GM12878 (cell line): ENCODE measurements at regions of chr3 and their contacts with region 1.

Region 1: DNA sequence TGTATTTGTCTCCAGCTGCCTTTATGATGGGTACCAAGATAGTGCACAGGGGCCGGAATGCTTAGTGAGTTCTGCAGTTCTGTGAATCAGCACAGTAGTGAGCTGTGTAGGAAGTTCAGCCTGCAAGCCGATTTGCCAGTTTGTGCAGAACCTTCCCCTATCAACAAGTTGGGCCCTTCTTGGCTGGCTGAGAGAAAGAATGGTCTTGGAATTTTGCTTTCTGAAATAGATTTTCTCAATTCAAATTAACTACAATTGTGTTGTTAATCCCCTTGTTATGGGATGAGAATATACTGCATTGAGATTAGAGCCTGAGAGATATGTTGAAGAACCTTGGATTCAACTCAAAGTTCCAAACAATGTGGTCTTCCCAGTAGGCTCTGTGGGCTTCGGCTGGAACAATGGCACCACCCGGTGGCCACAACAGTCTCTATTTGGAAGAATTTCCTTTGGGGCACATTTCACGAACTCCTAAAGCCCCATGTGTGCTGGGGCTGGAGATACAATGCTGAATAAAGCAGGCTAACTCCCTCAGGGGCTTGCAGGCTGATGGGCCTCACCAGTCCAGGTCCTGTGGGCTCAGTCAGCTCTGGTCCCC is 59.1 kb downstream of the TRIM42 start:
- DNase-seq: no peak
- ATAC-seq: peak; percentile 83
- H3K4me3 ChIP-seq: no peak overlapping the region
- H3K27ac ChIP-seq: no peak overlapping the region
- H3K4me1 ChIP-seq: no peaks in the 10 kb centered on the region
- H3K27me3 ChIP-seq: peaks cover 0 to 6% of the 10 kb centered on the region in 2 experiments; a peak in 2 of 4 replicates
- CTCF ChIP-seq: peak; percentile 33 to 67 (median 45); a peak in 4 of 6 replicates
- EP300 ChIP-seq: no peak
- POLR2A ChIP-seq: no peak
- RAD21 ChIP-seq: peak; percentile 64

Region 2: DNA sequence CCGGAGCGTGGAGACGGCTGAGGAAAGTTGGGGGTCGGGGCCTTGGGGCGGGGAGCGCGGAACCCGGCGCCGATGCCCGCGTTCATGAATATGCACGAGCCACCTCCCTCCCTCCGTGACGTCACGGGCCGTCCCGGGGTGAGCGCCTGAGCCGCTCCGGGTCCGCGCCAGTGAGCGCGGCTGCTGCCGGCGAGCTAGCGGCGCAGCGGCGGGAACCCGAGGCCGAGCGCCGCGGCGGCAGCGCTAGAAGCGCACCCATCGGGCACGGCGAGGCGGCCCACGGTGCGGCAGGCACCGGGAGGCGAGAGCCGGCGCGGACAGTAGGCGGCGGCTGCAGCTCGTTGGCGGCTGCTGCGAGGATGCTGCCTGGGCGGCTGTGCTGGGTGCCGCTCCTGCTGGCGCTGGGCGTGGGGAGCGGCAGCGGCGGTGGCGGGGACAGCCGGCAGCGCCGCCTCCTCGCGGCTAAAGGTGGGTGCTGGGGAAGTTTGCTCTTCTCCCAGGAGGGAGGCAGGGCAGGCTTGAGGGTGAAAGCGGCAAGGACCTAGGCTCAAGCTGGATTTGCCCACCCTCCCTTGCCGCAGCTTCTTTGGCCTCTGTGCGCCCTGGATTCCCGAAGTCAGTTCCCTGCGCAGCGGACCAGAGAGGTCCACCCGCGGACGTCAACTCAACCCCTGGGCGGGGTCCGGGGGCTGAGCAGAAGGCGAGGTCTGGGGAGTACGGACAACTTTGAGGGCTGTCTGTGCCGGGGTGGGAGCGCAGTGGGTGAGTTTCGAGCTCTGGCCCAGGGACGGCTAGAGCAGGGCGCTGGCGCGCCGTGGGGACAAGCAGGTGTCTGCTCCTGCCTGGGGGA is 801.7 kb before region 1 on chr3 and contains the start of gene CLSTN2:
- CTCF ChIA-PET with region 1: no interaction called
- POLR2A ChIA-PET with region 1: no interaction called
- RAD21 ChIA-PET with region 1: no interaction called
- SMC1A ChIA-PET with region 1: interaction called, 6 read pairs
- in situ Hi-C with region 1: no loop called
- intact Hi-C with region 1: loop called (anchors 1 kb)
- DNase-seq: no peak
- ATAC-seq: peak; percentile 51
- H3K4me3 ChIP-seq: no peak within 1 kb of the TSS
- H3K27ac ChIP-seq: no peak within 1 kb of the TSS
- H3K4me1 ChIP-seq: no peaks in the 10 kb centered on the region
- H3K27me3 ChIP-seq: peaks cover 7% of the 10 kb centered on the region in 2 experiments; a peak in 3 of 4 replicates
- CTCF ChIP-seq: no peak
- EP300 ChIP-seq: no peak
- POLR2A ChIP-seq: no peak
- RAD21 ChIP-seq: no peak
- polyA plus RNA-seq, gene CLSTN2: under 0.01 to 0.10 TPM

Region 3: GRCh38 chr3:140432229-140432669 is 304.7 kb before region 1 on chr3:
- CTCF ChIA-PET with region 1: no interaction called
- POLR2A ChIA-PET with region 1: no interaction called
- RAD21 ChIA-PET with region 1: no interaction called
- SMC1A ChIA-PET with region 1: no interaction called
- in situ Hi-C with region 1: no loop called
- intact Hi-C with region 1: loop called (anchors 10 kb)
- DNase-seq: no peak
- ATAC-seq: no peak
- H3K4me3 ChIP-seq: no peak overlapping the region
- H3K27ac ChIP-seq: no peak overlapping the region
- H3K4me1 ChIP-seq: no peaks in the 10 kb centered on the region
- H3K27me3 ChIP-seq: peaks cover 0 to 1% of the 10 kb centered on the region in 2 experiments; a peak in 2 of 4 replicates
- CTCF ChIP-seq: no peak
- EP300 ChIP-seq: no peak
- POLR2A ChIP-seq: no peak
- RAD21 ChIP-seq: no peak

Region 4: DNA sequence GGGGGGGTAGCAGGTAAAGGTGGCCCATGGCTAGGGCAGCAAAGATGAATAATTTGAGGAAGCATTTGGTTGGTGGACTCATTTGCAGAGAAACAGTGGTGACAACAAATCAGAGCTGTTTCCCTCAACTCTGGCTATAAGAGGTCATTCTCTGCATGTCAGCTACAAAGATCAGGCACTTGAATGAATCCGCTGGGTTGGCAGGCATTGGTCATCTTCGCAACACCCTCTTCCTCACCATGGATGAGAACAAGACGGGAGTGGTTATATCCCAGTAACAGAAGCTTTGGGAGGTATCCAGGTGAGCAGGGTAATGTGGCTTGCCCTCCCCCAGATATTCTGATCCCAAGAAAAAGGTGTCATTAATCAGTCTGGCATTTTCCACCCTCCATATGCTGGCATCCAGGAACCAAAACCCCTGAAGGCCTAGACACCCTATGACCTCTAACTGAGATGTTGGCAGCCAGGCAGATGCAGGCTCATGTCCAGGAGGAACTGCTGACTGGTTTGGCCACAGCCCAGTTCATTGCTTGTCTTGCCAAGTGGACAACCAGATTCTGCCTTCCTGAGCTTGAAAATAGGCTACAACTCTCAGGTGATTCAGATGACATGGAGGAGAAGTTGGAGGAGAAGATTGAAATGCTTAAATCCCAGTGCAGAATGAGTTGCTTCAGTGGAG is 168.0 kb before region 1 on chr3:
- CTCF ChIA-PET with region 1: no interaction called
- POLR2A ChIA-PET with region 1: no interaction called
- RAD21 ChIA-PET with region 1: no interaction called
- SMC1A ChIA-PET with region 1: no interaction called
- in situ Hi-C with region 1: no loop called
- intact Hi-C with region 1: loop called (anchors 10 kb)
- DNase-seq: no peak
- ATAC-seq: no peak
- H3K4me3 ChIP-seq: no peak overlapping the region
- H3K27ac ChIP-seq: no peak overlapping the region
- H3K4me1 ChIP-seq: no peaks in the 10 kb centered on the region
- H3K27me3 ChIP-seq: no peaks in the 10 kb centered on the region; a peak in 2 of 4 replicates
- CTCF ChIP-seq: no peak
- EP300 ChIP-seq: no peak
- POLR2A ChIP-seq: no peak
- RAD21 ChIP-seq: no peak

Region 5: DNA sequence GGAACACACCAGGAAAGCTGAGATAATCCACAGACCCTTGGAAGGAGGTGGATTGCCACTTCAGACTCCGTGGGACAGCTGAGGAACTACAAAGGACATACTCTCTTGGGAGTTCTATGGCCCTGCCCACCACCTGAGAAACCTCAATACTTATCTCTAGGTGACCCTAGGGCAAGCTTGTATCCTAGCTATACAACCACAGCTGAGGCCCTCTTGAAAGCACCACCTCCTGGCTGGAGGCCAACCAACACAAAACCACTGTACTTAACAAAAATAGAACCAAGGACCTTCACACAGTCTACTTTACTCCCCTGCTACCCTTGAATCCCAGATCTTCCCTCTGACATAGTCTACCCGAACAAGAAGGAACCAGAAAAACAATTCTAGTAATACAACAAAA is 119.8 kb before region 1 on chr3:
- CTCF ChIA-PET with region 1: no interaction called
- POLR2A ChIA-PET with region 1: no interaction called
- RAD21 ChIA-PET with region 1: no interaction called
- SMC1A ChIA-PET with region 1: no interaction called
- in situ Hi-C with region 1: no loop called
- intact Hi-C with region 1: no loop called
- DNase-seq: no peak
- ATAC-seq: no peak
- H3K4me3 ChIP-seq: no peak overlapping the region
- H3K27ac ChIP-seq: no peak overlapping the region
- H3K4me1 ChIP-seq: no peaks in the 10 kb centered on the region
- H3K27me3 ChIP-seq: no peaks in the 10 kb centered on the region
- CTCF ChIP-seq: no peak
- EP300 ChIP-seq: no peak
- POLR2A ChIP-seq: no peak
- RAD21 ChIP-seq: no peak

Region 6: GRCh38 chr3:140724856-140725812 is 11.8 kb before region 1 on chr3:
- CTCF ChIA-PET with region 1: interaction called, 17 read pairs
- POLR2A ChIA-PET with region 1: interaction called, 3 read pairs
- RAD21 ChIA-PET with region 1: interaction called, 7 read pairs
- SMC1A ChIA-PET with region 1: interaction called, 9 read pairs
- in situ Hi-C with region 1: no loop called
- intact Hi-C with region 1: no loop called
- DNase-seq: no peak
- ATAC-seq: peak; percentile 86
- H3K4me3 ChIP-seq: no peak overlapping the region
- H3K27ac ChIP-seq: peak overlapping the region; percentile 58
- H3K4me1 ChIP-seq: peaks cover 11% of the 10 kb centered on the region; the same call in 1 of the 2 replicates
- H3K27me3 ChIP-seq: no peaks in the 10 kb centered on the region
- CTCF ChIP-seq: no peak
- EP300 ChIP-seq: peak in 1 of 2 experiments; percentile 21; a peak in 2 of 4 replicates
- POLR2A ChIP-seq: no peak
- RAD21 ChIP-seq: no peak

Region 7: DNA sequence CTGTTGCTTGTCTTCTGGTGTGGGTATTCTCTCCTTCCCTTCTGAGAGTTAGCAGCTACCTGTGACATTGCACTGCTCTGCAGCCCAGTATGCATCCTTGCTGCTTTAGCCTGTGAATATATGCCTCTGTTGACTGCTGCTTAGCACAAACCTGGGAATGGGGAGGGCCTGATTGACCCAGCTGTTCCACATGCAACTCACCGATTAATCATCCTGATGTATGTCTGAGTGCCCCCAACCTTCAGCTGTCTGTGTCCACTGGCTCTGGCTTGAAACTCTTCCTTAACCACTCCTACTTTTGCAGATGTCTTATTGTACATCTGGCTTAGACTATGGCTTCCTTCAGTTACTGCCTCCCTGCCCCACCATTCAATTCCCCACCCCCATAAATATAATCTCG is 868.9 kb after region 1 on chr3:
- CTCF ChIA-PET with region 1: no interaction called
- POLR2A ChIA-PET with region 1: no interaction called
- RAD21 ChIA-PET with region 1: no interaction called
- SMC1A ChIA-PET with region 1: no interaction called
- in situ Hi-C with region 1: no loop called
- intact Hi-C with region 1: no loop called
- DNase-seq: no peak
- ATAC-seq: no peak
- H3K4me3 ChIP-seq: no peak overlapping the region
- H3K27ac ChIP-seq: no peak overlapping the region
- H3K4me1 ChIP-seq: no peaks in the 10 kb centered on the region
- H3K27me3 ChIP-seq: no peaks in the 10 kb centered on the region
- CTCF ChIP-seq: no peak
- EP300 ChIP-seq: no peak
- POLR2A ChIP-seq: no peak
- RAD21 ChIP-seq: no peak